ENCODE measurements at regions of chr2 and their contacts with region 1.

Region 1: DNA sequence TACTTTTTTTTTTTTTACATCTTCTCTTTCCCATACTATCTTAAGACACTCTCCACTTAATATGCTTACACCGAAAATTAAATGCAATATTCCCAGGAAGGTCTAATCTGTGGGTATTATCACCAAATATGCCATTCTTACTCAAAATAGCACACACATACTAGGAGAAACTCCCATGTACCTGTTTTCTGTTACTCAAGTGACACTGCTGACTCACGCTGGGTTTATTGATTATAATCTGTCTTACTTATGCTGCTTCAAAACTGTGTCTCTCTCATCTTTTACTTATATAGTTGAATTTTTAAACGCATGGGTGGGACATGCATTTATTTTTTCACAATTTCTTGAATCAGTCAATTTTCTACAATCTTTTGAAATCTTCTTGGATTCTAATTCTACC is 29.9 kb downstream of the MRPL19 start:
- DNase-seq: no peak
- CTCF ChIP-seq: no peak

Region 2: GRCh38 chr2:75640621-75641121 is 35.8 kb before region 1 on chr2:
- CTCF ChIA-PET with region 1: interaction called, 36 read pairs
- POLR2A ChIA-PET with region 1: no interaction called
- DNase-seq: peak; percentile 51
- CTCF ChIP-seq: peak; percentile 97

Region 3: DNA sequence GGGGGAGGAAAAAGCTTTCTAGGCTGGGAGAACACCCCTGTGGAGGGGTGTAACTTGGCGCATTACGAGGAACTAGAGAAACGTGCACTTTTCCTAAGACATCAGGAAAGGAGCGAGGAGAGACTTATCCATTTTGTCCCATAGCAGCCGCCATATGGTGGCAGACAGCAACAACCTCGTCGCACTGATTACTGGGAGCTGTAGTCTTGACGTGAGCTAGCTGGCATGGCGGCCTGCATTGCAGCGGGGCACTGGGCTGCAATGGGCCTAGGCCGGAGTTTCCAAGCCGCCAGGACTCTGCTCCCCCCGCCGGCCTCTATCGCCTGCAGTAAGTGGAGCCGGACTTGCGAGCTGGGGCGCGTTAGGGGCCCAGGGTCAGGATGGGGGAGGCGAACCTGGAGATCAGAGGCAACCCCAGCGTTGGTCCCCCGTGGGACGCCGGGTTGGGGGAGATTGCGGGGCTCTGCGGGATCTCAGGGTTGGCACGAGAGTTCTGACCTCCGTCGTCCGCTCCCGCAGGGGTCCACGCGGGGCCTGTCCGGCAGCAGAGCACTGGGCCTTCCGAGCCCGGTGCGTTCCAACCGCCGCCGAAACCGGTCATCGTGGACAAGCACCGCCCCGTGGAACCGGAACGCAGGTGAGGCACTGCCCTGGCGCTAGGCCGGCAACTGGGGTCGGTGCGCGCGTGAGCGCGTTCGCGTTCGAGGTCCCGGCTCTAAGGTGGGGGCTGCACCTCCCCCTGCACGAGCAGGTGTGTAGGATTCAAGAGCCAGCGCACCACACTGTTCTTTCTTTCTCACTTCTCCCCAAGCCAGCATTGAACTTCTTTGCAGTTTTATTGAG is 29.7 kb before region 1 on chr2 and contains the start of gene MRPL19:
- CTCF ChIA-PET with region 1: interaction called, 36 read pairs
- POLR2A ChIA-PET with region 1: no interaction called
- DNase-seq: peak; percentile 92
- CTCF ChIP-seq: no peak

Region 4: GRCh38 chr2:75655861-75656260 is 20.6 kb before region 1 on chr2:
- CTCF ChIA-PET with region 1: interaction called, 10 read pairs
- POLR2A ChIA-PET with region 1: no interaction called
- DNase-seq: no peak
- CTCF ChIP-seq: no peak

Measured in GM10248 (cell line).